ENCODE measurements at regions of chr2 and their contacts with region 1.

Region 1: GRCh38 chr2:216371756-216372702 is at the start of gene MARCHF4:
- DNase-seq: peak; percentile 60
- H3K4me3 ChIP-seq: peak within 1 kb of the TSS; percentile 81
- H3K27ac ChIP-seq: peak within 1 kb of the TSS; percentile 96
- H3K27me3 ChIP-seq: no peaks in the 10 kb centered on the region
- CTCF ChIP-seq: no peak
- polyA plus RNA-seq, gene MARCHF4: 3.8 and 4.3 TPM in 2 replicates

Region 2: DNA sequence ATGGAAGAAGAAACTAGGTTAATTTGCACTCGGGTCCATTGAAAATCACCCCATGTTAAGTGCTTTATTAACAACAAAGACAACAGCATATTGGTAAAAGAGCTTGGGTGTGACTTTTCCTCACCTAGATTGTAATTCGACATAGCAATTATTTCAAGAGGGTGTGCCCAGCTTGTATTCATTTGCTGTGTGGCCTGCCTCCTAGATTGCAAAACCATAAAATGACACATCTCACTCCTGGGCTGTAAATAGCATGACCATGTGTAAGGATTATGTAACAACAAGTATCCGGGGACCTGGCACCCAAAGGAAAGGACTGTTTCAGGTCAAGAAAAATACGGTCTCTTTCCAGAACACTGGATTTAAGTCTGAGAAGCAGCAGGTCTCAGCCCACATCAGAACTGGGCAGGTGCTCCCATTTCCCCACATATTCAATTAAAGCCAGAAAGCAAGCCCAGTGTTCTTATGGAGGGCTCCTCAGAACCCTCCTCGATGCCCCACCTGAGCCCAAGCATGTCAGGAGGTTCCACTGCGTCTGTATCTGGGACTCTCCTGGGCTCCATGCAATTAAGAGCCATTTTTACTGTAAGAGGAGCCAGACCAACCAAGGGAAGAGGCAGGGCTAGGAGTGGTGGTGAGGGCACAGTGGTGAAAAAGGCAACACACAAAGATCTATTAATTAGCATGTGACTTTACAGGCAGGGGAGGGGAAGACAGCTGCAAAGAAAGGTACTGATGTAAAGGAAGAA is 397.9 kb before region 1 on chr2:
- CTCF ChIA-PET with region 1: no interaction called
- POLR2A ChIA-PET with region 1: no interaction called
- DNase-seq: no peak
- H3K4me3 ChIP-seq: no peak overlapping the region
- H3K27ac ChIP-seq: no peak overlapping the region
- H3K27me3 ChIP-seq: no peaks in the 10 kb centered on the region
- CTCF ChIP-seq: no peak

Region 3: GRCh38 chr2:216389570-216389969 is 17.5 kb after region 1 on chr2:
- CTCF ChIA-PET with region 1: no interaction called
- POLR2A ChIA-PET with region 1: no interaction called
- DNase-seq: no peak
- H3K4me3 ChIP-seq: no peak overlapping the region
- H3K27ac ChIP-seq: no peak overlapping the region
- H3K27me3 ChIP-seq: no peaks in the 10 kb centered on the region
- CTCF ChIP-seq: no peak

Region 4: GRCh38 chr2:216412022-216412999 is 40.3 kb after region 1 on chr2 and contains the start of gene SMARCAL1:
- CTCF ChIA-PET with region 1: no interaction called
- POLR2A ChIA-PET with region 1: interaction called, 10 read pairs
- DNase-seq: peak; percentile 93
- H3K4me3 ChIP-seq: peak within 1 kb of the TSS; percentile 93
- H3K27ac ChIP-seq: peak within 1 kb of the TSS; percentile 80
- H3K27me3 ChIP-seq: peaks cover 2% of the 10 kb centered on the region
- CTCF ChIP-seq: no peak
- polyA plus RNA-seq, gene SMARCAL1: 27.1 and 28.6 TPM in 2 replicates

Region 5: GRCh38 chr2:216519154-216519762 is 147.2 kb after region 1 on chr2:
- CTCF ChIA-PET with region 1: no interaction called
- POLR2A ChIA-PET with region 1: no interaction called
- DNase-seq: peak; percentile 75
- H3K4me3 ChIP-seq: no peak overlapping the region
- H3K27ac ChIP-seq: no peak overlapping the region
- H3K27me3 ChIP-seq: no peaks in the 10 kb centered on the region
- CTCF ChIP-seq: peak; percentile 76

Measured in AG04450 (cell line).